ENCODE measurements at regions of chr12 and their contacts with region 1.

Region 1: DNA sequence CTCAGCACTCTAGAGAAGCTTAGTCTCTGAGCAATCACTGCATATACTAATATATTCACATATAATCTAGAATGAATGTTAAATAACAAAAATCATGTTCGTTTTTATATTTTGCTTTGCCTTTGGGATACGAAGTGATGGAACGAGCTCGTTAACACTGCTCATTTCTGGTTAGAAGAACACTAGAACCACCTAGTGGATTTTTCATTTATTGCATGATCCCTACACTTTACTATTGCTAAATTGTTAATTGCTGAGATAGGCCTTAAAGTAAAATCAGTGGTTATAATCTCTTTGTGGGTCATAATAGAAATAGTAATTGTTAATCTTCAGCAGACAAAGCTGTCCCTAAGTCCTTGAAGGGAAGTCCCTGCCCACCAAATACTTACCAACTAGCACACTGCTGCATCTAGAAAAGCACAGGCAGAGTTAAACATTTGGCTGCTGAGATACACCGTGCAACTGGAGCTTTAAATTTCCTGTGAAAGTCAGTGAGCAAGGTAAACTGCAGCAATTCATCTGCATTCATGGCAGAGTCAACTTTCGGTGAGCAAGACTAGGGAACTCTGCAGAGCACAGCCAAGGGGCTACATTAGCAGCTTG is 353.7 kb downstream of the APAF1 start:
- DNase-seq: no peak
- H3K4me3 Mint-ChIP-seq: no peak overlapping the region
- H3K27ac Mint-ChIP-seq: no peak overlapping the region
- H3K4me1 Mint-ChIP-seq: no peaks in the 10 kb centered on the region
- H3K27me3 Mint-ChIP-seq: peaks cover 8% of the 10 kb centered on the region

Region 2: GRCh38 chr12:98424726-98425401 is 573.9 kb before region 1 on chr12:
- intact Hi-C with region 1: loop called (anchors 10 kb)
- DNase-seq: peak; percentile 18
- H3K4me3 Mint-ChIP-seq: no peak overlapping the region
- H3K27ac Mint-ChIP-seq: no peak overlapping the region
- H3K4me1 Mint-ChIP-seq: peaks cover 6% of the 10 kb centered on the region
- H3K27me3 Mint-ChIP-seq: peaks cover 7% of the 10 kb centered on the region

Region 3: GRCh38 chr12:98490501-98491453 is 508.0 kb before region 1 on chr12:
- intact Hi-C with region 1: loop called (anchors 5 kb)
- DNase-seq: peak; percentile 72
- H3K4me3 Mint-ChIP-seq: peak overlapping the region; percentile 24
- H3K27ac Mint-ChIP-seq: peak overlapping the region; percentile 84
- H3K4me1 Mint-ChIP-seq: peaks cover 8% of the 10 kb centered on the region
- H3K27me3 Mint-ChIP-seq: peaks cover 10% of the 10 kb centered on the region

Region 4: DNA sequence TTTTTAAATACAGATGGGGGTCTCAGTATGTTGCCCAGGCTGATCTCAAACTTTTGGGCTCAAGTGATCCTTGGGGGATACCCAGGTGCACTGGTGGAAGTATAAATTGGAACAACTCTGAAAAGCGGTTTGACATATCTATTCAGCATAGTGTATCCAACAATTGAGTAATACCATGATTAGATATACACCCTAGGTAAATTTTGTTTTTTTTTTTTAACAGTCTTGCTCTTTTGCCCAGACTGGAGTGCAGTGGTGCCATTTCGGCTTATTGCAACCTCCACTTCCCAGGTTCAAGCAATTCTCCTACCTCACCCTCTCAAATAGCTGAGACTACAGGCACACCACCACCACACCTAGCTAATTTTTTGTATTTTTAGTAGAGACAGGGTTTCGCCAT is 437.0 kb before region 1 on chr12:
- intact Hi-C with region 1: loop called (anchors 1 kb)
- DNase-seq: no peak
- H3K4me3 Mint-ChIP-seq: no peak overlapping the region
- H3K27ac Mint-ChIP-seq: no peak overlapping the region
- H3K4me1 Mint-ChIP-seq: peaks cover 4% of the 10 kb centered on the region
- H3K27me3 Mint-ChIP-seq: peaks cover 3% of the 10 kb centered on the region

Region 5: DNA sequence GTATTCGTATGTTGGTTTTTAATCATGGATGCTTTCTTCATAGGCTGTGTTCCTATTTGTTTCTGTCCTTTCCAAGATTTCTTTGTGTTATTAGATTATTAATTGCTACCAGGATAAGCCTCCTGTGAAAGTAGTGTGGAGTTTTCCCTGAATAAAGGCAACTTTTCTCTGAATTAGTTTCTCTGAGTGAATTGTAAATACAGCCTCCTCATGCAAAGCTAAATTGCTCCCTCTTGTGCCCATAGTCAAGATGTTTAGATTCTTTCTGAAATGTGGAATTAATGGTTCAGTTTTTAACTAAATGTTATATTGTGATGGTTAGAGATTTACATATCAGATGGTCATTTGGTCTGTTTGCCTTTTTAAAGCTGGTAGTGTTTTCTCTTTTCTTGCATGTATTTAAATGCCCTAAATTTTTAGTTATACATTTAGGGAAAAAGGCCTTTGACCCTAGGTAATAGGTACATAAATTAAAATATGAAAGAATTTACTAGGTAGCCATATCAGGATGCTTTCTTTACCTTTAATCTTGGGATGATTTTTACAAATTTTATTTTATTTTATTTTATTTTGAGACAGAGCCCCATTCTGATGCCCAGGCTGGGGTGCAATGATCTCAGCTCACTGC is 344.8 kb before region 1 on chr12:
- intact Hi-C with region 1: loop called (anchors 2 kb)
- DNase-seq: no peak
- H3K4me3 Mint-ChIP-seq: no peak overlapping the region
- H3K27ac Mint-ChIP-seq: no peak overlapping the region
- H3K4me1 Mint-ChIP-seq: peaks cover 18% of the 10 kb centered on the region
- H3K27me3 Mint-ChIP-seq: no peaks in the 10 kb centered on the region

Region 6: GRCh38 chr12:98698603-98699463 is 300.0 kb before region 1 on chr12:
- intact Hi-C with region 1: loop called (anchors 1 kb)
- DNase-seq: peak; percentile 26
- H3K4me3 Mint-ChIP-seq: no peak overlapping the region
- H3K27ac Mint-ChIP-seq: no peak overlapping the region
- H3K4me1 Mint-ChIP-seq: peaks cover 21% of the 10 kb centered on the region
- H3K27me3 Mint-ChIP-seq: no peaks in the 10 kb centered on the region

Region 7: GRCh38 chr12:98725476-98726247 is 273.1 kb before region 1 on chr12:
- intact Hi-C with region 1: loop called (anchors 1 kb)
- DNase-seq: peak; percentile 29
- H3K4me3 Mint-ChIP-seq: no peak overlapping the region
- H3K27ac Mint-ChIP-seq: peak overlapping the region; percentile 16
- H3K4me1 Mint-ChIP-seq: peaks cover 14% of the 10 kb centered on the region
- H3K27me3 Mint-ChIP-seq: no peaks in the 10 kb centered on the region